Activated T-helper 1 cell treated with anti-CD3 and anti-CD28 coated beads, Interleukin-12 subunit alpha, Interleukin-12 subunit beta, Interleukin-2, Interleukin-4 antibody, amounts not matched to agents 30 ng/mL and 10 ng/mL and 1 ng/mL, durations not matched to agents 14 hours and 24 hours and 36 hours (primary cell): ENCODE measurements at regions of chr14 and their contacts with region 1.

Region 1: DNA sequence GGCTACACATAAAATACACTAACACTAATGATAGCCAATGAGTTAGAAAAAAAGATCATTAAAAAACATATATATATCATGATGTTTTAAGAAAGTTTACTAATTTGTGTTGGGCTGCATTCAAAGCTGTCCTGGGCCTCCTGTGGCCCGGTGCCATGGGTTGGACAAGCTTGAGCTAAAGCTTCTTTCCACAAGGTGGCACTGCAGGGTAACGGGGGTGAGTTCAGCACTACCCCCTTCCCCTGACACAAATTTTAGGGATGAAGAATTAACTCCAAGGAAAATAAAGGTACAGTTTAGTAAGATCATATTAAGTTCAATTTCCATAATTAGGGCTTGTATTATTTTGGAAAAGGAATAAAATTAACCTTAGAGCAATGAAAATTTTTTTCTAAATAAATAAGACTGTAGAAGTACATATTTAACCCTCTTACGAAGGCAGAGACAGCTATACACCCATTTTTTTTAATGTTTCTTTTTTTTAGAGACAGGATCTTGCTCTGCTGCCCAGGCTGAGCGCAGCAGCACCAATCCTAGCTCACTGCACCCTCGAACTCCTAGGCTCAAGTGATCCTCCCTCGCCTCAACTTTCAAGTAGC is 38.9 kb downstream of the PPP1R13B start:
- DNase-seq: peak; percentile 43
- H3K4me3 Mint-ChIP-seq: no peak overlapping the region
- H3K27ac Mint-ChIP-seq: no peak overlapping the region
- H3K4me1 Mint-ChIP-seq: peaks cover 8% of the 10 kb centered on the region
- H3K27me3 Mint-ChIP-seq: peaks cover 3% of the 10 kb centered on the region

Region 2: DNA sequence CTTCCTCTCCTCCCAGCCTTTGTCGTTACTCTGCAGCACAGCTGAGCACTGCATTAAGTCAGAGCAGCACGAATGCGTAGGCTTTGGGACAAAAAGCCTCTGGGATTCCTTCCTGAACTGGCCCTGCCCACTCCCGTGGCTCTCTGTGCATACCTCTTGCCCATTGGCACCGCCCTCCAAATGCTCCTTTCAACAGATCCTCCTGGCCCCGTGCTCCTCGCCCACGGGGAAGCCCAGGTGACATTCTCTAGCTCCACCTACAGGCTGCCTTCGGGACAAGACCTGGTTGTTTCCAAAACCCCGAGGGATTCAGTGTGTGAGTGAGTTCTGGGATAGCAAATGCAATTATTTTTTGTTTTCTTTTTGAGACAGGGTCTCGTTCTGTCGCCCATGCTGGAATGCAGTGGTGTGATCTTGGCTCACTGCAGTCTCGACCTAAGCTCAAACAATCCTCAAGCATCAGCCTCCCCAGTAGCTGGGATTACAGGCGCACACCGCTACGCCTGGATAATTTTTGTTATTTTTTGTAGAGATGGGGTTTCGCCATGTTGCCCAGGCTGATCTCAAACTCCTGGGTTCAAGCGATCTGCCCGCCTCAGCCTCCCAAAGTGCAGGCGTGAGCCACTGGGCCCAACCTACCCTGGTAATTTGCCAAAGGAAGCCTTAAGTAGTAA is 101.9 kb after region 1 on chr14:
- intact Hi-C with region 1: loop called (anchors 1 kb)
- DNase-seq: peak; percentile 56
- H3K4me3 Mint-ChIP-seq: peak overlapping the region; percentile 16
- H3K27ac Mint-ChIP-seq: peak overlapping the region; percentile 68
- H3K4me1 Mint-ChIP-seq: peaks cover 21% of the 10 kb centered on the region
- H3K27me3 Mint-ChIP-seq: no peaks in the 10 kb centered on the region

Region 3: DNA sequence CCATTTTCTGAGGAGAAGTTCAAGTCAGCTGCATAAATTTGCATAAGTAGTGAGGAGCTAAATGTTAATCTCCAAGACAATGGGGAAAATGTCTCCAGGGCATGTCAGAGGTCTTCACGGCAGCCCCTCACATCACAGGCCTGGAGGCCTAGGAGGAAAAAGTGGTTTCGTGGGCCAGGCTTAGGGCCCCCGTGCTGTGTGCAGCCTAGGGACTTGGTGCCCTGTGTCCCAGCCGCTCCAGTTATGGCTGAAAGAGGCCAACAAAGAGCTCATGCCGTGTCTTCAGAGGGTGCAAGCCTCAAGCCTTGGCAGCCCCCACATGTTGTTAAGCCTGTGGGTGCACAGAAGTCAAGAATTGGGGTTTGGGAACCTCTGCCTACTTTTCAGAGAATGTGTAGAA is 175.7 kb after region 1 on chr14:
- intact Hi-C with region 1: loop called (anchors 2 kb)
- DNase-seq: no peak
- H3K4me3 Mint-ChIP-seq: no peak overlapping the region
- H3K27ac Mint-ChIP-seq: no peak overlapping the region
- H3K4me1 Mint-ChIP-seq: no peaks in the 10 kb centered on the region
- H3K27me3 Mint-ChIP-seq: peaks cover 16% of the 10 kb centered on the region

Region 4: GRCh38 chr14:104001003-104001402 is 192.5 kb after region 1 on chr14:
- intact Hi-C with region 1: loop called (anchors 5 kb)
- DNase-seq: no peak
- H3K4me3 Mint-ChIP-seq: no peak overlapping the region
- H3K27ac Mint-ChIP-seq: no peak overlapping the region
- H3K4me1 Mint-ChIP-seq: no peaks in the 10 kb centered on the region
- H3K27me3 Mint-ChIP-seq: peaks cover 5% of the 10 kb centered on the region